ENCODE measurements at regions of chr3 and their contacts with region 1.

Region 1: DNA sequence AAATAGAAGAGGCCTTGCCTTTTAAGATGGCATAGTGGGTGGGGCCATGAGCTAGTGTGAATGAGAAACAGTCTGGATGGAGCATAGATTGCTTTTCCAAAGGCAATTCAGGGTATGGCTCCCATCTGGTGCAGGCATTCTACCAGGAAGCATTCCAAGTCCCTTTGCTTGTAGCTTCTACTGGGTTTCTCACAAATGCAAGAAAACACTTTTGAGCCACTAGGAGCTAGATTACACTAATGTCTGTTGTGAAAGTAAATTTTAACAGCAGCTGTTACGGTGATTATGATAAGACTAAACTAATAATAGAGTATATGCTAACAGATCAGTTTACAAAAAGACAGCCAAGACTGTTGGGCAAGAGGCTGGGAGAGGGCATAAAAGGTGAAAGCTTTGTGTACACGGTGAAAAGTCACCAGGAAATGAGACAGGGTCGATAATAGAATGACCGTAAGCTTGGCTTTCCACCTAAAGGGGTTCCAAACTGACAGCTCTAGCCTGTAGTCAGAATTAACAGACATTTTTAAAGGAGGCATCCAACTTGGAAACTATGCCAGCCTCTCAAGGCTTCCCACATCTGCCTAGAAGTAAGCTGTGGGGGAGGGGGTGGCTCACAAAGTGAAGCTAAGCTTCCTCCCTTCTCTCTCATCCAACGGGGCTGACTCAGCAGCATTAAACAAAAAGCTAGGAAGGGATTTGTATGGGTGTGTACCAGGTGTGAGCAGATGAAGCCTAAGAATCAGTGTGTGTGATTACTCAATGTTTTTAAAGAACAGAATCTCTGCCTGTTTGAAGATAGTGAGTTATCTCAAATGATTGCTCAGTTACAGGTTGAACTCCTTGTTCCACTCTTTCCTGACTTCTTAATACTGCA is 61.1 kb upstream of the GPD1L start:
- DNase-seq: peak; percentile 85
- ATAC-seq: peak; percentile 97
- H3K4me3 ChIP-seq: peak overlapping the region in 1 of 3 experiments; percentile 14; a peak in 1 of 6 replicates
- H3K27ac ChIP-seq: no peak overlapping the region
- H3K4me1 ChIP-seq: peaks cover 20% of the 10 kb centered on the region
- H3K27me3 ChIP-seq: peaks cover 1 to 49% of the 10 kb centered on the region in 2 experiments; a peak in 3 of 5 replicates
- CTCF ChIP-seq: no peak
- EP300 ChIP-seq: peak in 1 of 2 experiments; percentile 81; a peak in 2 of 4 replicates
- POLR2A ChIP-seq: no peak
- RAD21 ChIP-seq: no peak

Region 2: DNA sequence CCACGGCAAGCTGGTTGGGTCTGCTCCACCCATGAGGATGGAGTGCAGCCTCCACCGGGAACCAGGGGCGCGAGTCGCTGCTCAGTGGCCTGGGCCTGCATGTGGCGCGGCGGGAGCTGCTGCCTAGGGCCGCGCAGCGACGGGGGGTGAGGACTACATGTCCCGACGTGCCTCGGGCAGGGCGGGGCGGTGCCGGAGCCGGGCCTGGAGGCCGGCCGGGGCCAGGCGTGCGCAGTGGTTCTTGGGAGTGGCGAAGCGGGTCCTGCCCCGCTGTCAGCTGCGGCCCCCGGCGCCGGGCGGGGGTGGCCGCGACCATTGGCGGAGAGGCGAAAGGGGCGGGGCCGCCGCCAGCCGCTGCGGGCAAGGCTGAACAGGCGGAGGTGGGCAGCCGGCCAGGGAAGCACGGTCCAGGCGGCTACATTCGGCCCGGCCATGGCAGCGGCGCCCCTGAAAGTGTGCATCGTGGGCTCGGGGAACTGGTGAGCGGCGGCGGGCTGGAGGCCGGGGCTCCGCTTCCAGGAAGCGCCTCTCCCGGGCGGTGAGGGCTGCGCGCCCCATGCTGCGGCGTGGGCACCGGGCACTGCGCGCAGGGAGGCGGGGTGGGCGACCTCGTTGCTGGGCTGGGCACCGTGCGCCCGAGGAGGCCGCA is 61.1 kb after region 1 on chr3 and contains the start of gene GPD1L:
- CTCF ChIA-PET with region 1: no interaction called
- POLR2A ChIA-PET with region 1: no interaction called
- in situ Hi-C with region 1: no loop called
- intact Hi-C with region 1: loop called (anchors 1 kb)
- DNase-seq: peak; percentile 89
- ATAC-seq: peak; percentile 99
- H3K4me3 ChIP-seq: peak within 1 kb of the TSS; percentile 58 to 79 (median 75)
- H3K27ac ChIP-seq: no peak within 1 kb of the TSS
- H3K4me1 ChIP-seq: peaks cover 57% of the 10 kb centered on the region
- H3K27me3 ChIP-seq: no peaks in the 10 kb centered on the region; a peak in 1 of 5 replicates
- CTCF ChIP-seq: peak; percentile 33; the same call in 1 of the 2 replicates
- EP300 ChIP-seq: no peak
- POLR2A ChIP-seq: peak in 1 of 2 experiments; percentile 71; a peak in 2 of 4 replicates
- RAD21 ChIP-seq: no peak
- total RNA-seq, gene GPD1L: 13.7 and 20.1 TPM in 2 replicates